ENCODE measurements at regions of chr15 and their contacts with region 1.

Region 1: GRCh38 chr15:60408438-60409105 is 10.8 kb upstream of the ANXA2 start:
- DNase-seq: no peak
- ATAC-seq: peak in 3 of 4 donors; percentile 42 to 73 (median 69)
- H3K4me3 ChIP-seq: no peak overlapping the region
- H3K27ac ChIP-seq: peak overlapping the region in 1 of 12 donors; percentile 80
- H3K4me1 ChIP-seq: peaks cover 0 to 31% (median 0%) of the 10 kb centered on the region in 12 donors
- H3K27me3 ChIP-seq: no peaks in the 10 kb centered on the region
- CTCF ChIP-seq: no peak
- POLR2A ChIP-seq: no peak

Region 2: DNA sequence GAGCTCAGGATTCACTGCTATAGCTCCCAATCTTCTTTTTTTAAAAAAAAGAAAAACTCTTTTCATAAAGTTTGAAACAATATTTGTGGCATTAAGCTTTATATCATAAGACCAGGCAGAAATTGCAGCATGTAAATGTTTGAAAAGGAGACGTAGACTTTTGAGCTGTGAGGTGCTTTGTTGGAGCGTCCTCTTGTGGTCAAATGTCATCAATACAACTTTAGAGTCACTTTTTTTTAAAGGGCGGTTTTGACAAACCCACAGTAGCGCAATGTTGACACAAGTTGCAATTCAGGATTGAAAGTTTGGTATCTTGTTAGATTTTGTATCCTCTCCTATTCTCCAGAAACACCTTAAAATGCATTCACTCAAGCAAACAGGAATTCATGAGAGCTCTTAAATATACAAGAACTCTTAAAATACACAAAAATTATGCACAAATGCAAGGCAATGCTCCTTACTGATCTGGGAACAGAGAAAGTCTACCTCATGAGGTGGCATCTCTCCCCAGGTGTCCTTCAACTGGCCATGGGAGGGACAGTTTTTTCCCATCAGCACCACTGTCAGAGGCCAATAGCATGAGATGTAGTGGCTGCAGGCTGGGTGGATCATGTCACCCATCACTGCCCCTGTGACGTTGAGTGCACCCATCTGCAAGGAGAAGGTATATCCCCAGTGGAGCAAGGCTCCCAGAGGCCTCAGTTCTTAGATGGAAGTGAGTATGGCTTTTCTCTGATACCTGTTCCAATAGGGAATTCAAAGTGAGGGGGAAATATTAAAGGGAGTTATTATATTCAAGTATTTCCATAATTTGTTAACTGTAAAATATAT is 81.5 kb before region 1 on chr15:
- intact Hi-C with region 1: no loop called
- DNase-seq: no peak
- ATAC-seq: no peak
- H3K4me3 ChIP-seq: no peak overlapping the region
- H3K27ac ChIP-seq: no peak overlapping the region
- H3K4me1 ChIP-seq: peaks cover 0 to 4% (median 0%) of the 10 kb centered on the region in 12 donors
- H3K27me3 ChIP-seq: peaks cover 0 to 51% (median 23%) of the 10 kb centered on the region in 9 donors
- CTCF ChIP-seq: peak; percentile 65 to 91 (median 78)
- POLR2A ChIP-seq: no peak

Region 3: GRCh38 chr15:60428935-60429334 is 20.4 kb after region 1 on chr15:
- intact Hi-C with region 1: no loop called
- DNase-seq: no peak
- ATAC-seq: no peak
- H3K4me3 ChIP-seq: no peak overlapping the region
- H3K27ac ChIP-seq: no peak overlapping the region
- H3K4me1 ChIP-seq: peaks cover 0 to 11% (median 0%) of the 10 kb centered on the region in 12 donors
- H3K27me3 ChIP-seq: no peaks in the 10 kb centered on the region
- CTCF ChIP-seq: no peak
- POLR2A ChIP-seq: no peak

Region 4: DNA sequence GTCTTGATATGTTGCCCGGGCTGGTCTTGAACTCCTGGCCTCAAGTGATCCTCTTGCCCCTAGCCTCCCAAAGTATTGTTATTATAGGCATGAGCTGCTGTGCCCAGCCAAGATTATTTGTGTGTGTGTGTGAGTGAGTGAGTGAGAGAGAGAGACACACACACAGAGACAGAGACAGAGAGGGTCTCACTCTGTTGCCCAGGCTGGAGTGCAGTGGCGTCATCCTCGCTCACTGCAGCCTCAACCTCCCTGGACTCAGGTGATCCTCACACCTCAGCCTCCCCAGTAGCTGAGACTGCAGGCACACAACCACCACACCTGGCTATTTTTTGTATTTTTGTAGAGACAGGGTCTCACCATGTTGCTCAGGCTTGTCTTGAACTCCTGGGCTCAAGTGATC is 64.6 kb after region 1 on chr15:
- intact Hi-C with region 1: loop called in 1 of 10 experiments (anchors 2 kb)
- DNase-seq: no peak
- ATAC-seq: no peak
- H3K4me3 ChIP-seq: no peak overlapping the region
- H3K27ac ChIP-seq: no peak overlapping the region
- H3K4me1 ChIP-seq: peaks cover 3 to 39% (median 20%) of the 10 kb centered on the region in 12 donors
- H3K27me3 ChIP-seq: no peaks in the 10 kb centered on the region
- CTCF ChIP-seq: no peak
- POLR2A ChIP-seq: no peak

Measured in heart left ventricle (tissue), 16 donors.